ENCODE measurements at regions of chr5 and their contacts with region 1.

Region 1: GRCh38 chr5:135457424-135458071 is 5.4 kb upstream of the TIFAB start:
- H3K4me3 ChIP-seq: no peak overlapping the region
- H3K27ac ChIP-seq: no peak overlapping the region
- H3K4me1 ChIP-seq: no peaks in the 10 kb centered on the region
- CTCF ChIP-seq: peak; percentile 75

Region 2: GRCh38 chr5:135426102-135427082 is 31.2 kb before region 1 on chr5:
- CTCF ChIA-PET with region 1: interaction called, 16 read pairs
- POLR2A ChIA-PET with region 1: no interaction called
- H3K4me3 ChIP-seq: no peak overlapping the region
- H3K27ac ChIP-seq: no peak overlapping the region
- H3K4me1 ChIP-seq: no peaks in the 10 kb centered on the region
- CTCF ChIP-seq: no peak

Region 3: GRCh38 chr5:135437796-135438560 is 19.6 kb before region 1 on chr5:
- CTCF ChIA-PET with region 1: interaction called, 18 read pairs
- POLR2A ChIA-PET with region 1: interaction called, 4 read pairs
- H3K4me3 ChIP-seq: no peak overlapping the region
- H3K27ac ChIP-seq: no peak overlapping the region
- H3K4me1 ChIP-seq: no peaks in the 10 kb centered on the region
- CTCF ChIP-seq: no peak

Region 4: GRCh38 chr5:135476615-135477582 is 19.4 kb after region 1 on chr5:
- CTCF ChIA-PET with region 1: interaction called, 15 read pairs
- POLR2A ChIA-PET with region 1: no interaction called
- H3K4me3 ChIP-seq: no peak overlapping the region
- H3K27ac ChIP-seq: no peak overlapping the region
- H3K4me1 ChIP-seq: peaks cover 5% of the 10 kb centered on the region; the same call in 1 of the 2 replicates
- CTCF ChIP-seq: no peak

Region 5: DNA sequence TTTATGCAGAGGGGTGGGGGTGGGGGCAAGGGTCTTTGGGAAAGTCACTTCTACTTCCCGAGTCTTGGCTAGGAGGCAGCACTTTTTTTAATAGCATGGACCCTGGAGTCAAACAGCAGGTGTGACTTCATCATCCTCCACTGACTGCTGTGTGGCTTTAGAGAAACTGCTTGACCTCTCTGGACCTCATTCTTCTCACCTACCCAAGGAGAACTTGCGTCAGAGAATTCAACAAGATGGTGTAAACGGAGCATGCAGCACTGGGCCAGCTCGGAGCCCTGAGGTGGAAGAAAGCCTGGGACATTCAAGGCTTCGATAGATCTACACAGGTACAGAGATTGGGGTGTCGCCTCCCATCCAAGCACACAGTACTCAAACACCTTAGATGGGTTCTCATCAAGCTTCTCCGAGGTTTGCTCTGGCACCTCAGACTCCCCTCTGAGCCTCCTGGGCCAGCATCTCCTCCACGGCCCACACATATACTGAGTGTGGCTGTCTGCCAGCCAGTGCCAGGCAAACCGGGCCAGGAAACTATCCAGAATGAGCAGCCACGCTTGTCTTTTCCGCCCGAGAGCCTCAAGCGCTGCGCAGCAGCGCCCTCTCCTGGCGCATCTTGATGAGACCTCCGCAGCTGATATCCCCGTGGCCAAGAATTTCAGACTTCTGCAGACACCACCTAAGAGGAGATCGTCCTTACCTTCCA is 372.3 kb after region 1 on chr5:
- CTCF ChIA-PET with region 1: interaction called, 67 read pairs
- POLR2A ChIA-PET with region 1: no interaction called
- H3K4me3 ChIP-seq: no peak overlapping the region
- H3K27ac ChIP-seq: no peak overlapping the region
- H3K4me1 ChIP-seq: no peaks in the 10 kb centered on the region
- CTCF ChIP-seq: peak; percentile 76

Region 6: DNA sequence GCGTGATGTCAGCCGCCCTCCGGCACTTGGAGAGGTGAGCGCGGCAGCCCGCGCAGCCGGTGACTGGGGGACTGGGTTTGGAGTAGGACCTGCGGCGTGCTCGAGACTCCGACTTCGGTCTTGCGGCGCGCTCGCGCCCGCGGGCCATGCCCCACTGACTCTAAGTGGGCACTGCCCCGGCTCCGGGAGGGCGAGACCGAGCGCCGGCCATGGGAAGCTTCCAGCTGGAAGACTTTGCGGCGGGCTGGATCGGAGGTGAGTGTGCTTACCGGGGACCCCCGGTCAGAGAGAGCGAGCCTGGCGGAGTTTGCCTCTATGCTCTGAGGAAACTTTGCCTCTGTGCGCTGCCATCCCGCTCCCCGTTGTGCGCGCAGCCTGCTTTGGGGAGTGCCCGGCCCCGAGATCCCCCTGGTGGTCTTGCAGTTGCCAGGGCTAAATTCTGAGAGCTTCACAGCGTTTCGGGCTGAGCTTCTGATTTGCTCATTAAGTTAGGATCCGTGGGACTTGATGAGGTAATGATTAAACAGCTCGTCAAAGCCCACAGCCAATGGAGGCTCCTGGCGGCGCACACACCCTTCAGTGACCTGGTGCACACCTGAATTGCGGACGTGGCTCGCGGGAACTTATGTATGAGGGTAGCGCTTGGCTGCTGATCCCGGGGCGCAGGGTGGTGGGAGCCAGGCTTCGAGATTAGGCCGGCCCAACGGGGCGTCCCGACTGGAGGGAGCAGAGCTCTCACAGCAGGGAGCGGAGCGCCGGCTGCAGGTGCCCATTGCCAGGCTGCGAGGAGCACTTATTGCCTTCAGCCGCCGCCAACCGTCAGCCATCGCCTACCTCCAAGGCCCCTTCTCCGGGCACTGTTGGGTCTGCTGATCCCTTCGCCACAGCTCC is 377.3 kb after region 1 on chr5 and contains the start of gene SLC25A48:
- CTCF ChIA-PET with region 1: interaction called, 67 read pairs
- POLR2A ChIA-PET with region 1: no interaction called
- H3K4me3 ChIP-seq: peak within 1 kb of the TSS; percentile 62
- H3K27ac ChIP-seq: no peak within 1 kb of the TSS; the same call in 1 of the 2 replicates
- H3K4me1 ChIP-seq: 0 out of 2 replicates have a peak, but pooled peaks cover 2% of the 10 kb centered on the region
- CTCF ChIP-seq: peak; percentile 88

Region 7: DNA sequence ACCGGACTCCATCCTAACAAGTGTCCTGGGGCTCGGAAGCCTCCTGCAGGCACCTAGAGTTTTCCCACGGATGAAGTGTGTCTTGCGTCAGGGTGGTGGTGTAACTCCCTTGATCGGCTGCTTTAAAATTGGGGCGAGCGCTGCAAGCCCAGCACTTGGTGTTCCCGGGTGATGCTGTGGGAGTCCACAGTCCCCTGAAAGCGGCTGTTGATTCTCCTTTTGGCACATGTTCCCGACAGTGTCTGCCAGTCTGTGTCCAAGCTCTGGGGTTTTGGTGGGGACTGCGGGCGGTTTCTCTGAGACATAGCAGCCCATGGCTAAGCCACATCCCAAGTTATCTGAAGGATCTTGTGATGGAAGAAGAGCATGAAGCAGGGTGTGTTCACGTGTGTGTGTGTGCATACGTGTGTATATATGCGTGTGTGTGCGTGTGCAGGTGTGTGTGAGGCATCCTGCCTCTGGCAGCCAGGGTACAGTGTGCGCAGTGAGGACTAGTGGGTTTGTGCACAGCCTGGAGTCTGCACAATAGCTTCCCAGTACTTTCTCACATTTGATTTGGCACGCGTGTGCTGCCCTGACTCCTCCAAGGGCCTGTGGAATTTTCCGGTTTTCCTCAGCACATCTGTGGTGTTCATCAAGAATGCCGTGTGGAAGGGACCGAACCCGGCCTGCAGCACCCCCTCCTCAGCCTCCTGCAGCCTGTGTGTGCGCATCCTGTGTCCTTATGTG is 393.8 kb after region 1 on chr5:
- CTCF ChIA-PET with region 1: no interaction called
- POLR2A ChIA-PET with region 1: no interaction called
- H3K4me3 ChIP-seq: no peak overlapping the region
- H3K27ac ChIP-seq: no peak overlapping the region
- H3K4me1 ChIP-seq: no peaks in the 10 kb centered on the region
- CTCF ChIP-seq: no peak

Measured in HEK293 (cell line).